ENCODE measurements at regions of chr1 and their contacts with region 1.

Region 1: DNA sequence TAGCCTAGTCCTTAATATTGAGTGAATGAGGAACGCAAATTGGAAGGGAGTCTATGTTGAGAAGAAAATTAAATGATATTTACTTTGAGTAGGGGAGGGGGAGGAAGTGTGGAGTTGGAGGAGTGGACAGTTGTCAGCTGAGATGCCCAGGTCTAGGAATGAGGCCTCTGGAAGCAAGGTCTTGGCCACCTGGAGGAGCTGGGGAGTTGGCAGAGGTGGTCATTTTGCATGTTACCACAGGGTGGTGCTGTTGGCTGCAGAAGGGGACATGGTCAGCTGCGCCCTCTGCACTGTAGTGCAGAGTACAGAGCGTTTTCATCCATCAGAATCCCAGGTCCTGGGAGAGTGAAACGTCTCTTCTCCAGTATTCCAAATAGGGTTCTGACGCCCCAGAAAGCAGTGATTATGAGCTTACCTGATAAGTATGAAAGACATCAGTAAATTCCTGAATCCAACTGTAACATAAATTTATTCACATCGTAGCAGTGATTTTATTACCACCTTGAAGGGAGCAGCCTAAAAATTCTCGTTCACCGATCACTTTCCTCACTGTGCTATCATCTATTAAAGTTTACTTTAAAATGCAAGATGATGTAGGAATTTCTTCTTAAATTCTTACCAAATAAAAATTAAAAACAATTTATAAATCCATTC is 13.8 kb downstream of the PARK7 start:
- DNase-seq: peak; percentile 87
- H3K4me3 Mint-ChIP-seq: no peak overlapping the region
- H3K27ac Mint-ChIP-seq: no peak overlapping the region
- H3K4me1 Mint-ChIP-seq: no peaks in the 10 kb centered on the region
- H3K27me3 Mint-ChIP-seq: no peaks in the 10 kb centered on the region
- CTCF ChIP-seq: peak; percentile 95

Region 2: DNA sequence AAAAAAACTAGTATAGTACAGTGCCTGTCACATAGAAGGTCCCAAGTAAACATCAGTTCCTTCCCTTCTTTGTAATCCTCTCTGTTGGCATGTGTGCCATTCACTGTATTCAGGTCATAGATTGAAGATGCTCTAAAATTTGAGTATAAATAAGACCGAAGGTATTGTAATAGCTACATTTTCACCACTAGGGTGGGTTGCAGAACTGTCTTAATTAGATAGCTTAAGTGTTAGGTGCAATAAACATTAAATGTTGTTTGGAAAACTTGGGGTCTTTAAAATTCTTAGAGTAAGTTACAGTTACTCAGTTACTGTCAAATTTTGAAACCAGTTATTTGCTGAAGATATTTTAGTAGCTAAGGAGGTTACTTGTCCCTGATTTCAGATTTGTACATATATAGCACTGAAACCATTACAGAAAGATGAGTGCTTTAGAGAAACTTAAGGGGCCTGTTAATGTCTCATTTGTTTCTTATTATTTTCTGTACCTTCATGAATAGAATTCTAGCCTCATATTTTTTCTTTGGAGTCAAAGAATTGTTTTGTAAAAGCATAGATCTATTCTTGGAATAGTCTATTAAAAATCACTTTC is 167.0 kb before region 1 on chr1:
- CTCF ChIA-PET with region 1: no interaction called
- POLR2A ChIA-PET with region 1: no interaction called
- intact Hi-C with region 1: loop called (anchors 1 kb)
- DNase-seq: peak; percentile 44
- H3K4me3 Mint-ChIP-seq: no peak overlapping the region
- H3K27ac Mint-ChIP-seq: no peak overlapping the region
- H3K4me1 Mint-ChIP-seq: no peaks in the 10 kb centered on the region
- H3K27me3 Mint-ChIP-seq: no peaks in the 10 kb centered on the region
- CTCF ChIP-seq: peak; percentile 60

Region 3: DNA sequence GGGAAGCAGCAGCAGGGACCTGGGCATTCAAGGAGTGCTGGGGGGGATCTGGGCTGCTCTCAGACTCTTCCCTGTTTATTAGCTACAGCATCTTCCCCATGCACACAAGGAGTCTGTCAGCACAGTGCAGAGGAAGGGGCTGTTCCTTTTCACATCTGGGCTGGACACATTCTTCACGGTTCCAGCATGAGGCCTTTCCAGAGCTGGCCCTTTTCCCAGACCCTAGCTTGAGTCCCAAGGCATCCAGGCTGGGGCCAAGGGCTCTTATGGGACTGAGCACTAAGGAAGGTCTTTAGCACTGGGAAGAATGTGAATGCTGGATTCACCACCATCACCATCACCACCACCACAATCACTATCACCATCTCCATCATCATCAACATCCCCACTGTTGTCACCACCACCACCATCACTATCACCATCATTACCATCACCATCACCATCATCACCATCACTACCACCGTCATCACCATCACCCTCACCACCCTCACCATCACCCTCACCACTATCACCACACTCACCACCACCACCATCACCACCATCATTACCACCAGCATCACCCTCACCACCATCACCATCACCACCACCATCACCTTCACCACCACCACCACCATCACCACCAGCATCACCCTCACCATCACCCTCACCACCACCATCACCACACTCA is 14.6 kb after region 1 on chr1:
- CTCF ChIA-PET with region 1: interaction called, 21 read pairs
- POLR2A ChIA-PET with region 1: interaction called, 3 read pairs
- intact Hi-C with region 1: no loop called
- DNase-seq: no peak
- H3K4me3 Mint-ChIP-seq: no peak overlapping the region
- H3K27ac Mint-ChIP-seq: no peak overlapping the region
- H3K4me1 Mint-ChIP-seq: peaks cover 15% of the 10 kb centered on the region
- H3K27me3 Mint-ChIP-seq: no peaks in the 10 kb centered on the region
- CTCF ChIP-seq: no peak

Region 4: GRCh38 chr1:8010080-8010664 is 34.8 kb after region 1 on chr1:
- CTCF ChIA-PET with region 1: interaction called, 32 read pairs
- POLR2A ChIA-PET with region 1: interaction called, 35 read pairs
- intact Hi-C with region 1: loop called (anchors 5 kb)
- DNase-seq: no peak
- H3K4me3 Mint-ChIP-seq: no peak overlapping the region
- H3K27ac Mint-ChIP-seq: peak overlapping the region; percentile 79
- H3K4me1 Mint-ChIP-seq: peaks cover 48% of the 10 kb centered on the region
- H3K27me3 Mint-ChIP-seq: no peaks in the 10 kb centered on the region
- CTCF ChIP-seq: no peak

Region 5: DNA sequence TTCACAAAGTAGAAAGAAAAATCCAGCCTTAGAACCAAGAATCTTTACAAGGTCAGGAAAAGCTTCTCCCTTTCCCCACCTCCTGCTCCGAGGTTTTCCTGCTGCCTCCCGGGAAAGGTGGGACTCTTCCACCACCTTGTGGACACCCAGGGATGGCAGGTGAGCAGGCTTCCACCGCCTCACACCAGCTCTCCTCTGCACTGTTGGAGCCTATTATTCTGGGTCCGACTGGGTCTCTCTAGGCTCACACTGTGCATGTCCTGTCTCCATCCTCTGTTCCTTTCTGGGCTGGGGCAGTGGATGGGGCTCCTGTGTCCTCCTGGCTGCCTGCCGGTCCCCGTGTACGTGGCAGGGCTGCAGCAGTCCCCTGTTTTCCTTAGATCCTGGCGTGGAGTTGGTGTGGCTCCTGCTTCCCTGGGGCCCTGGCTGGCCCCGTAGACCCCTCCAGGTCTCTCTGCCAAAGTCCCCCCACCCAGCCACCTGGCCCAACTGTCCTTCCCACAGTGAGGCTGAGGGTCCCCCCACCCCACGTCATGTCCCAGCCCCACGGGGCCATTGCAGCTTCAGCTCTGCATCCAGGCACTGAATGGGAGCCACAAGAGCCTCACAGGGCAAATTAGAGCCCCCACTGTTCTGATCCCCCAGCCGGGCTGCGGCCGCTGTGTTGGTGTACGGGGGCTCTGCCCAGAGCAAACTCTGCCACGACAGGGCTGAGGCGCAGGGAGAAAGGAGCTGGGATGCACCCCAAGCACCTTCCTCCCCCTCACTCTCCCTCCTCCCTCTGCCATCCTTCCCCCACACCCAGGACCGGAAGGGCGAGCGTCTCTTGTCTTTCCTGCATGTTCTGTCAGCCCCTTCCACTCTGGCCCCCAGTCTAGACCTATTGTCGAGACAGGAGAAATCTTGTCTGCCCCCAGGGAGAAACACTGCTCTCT is 339.3 kb after region 1 on chr1:
- CTCF ChIA-PET with region 1: interaction called, 29 read pairs
- POLR2A ChIA-PET with region 1: interaction called, 14 read pairs
- intact Hi-C with region 1: loop called (anchors 1 kb)
- DNase-seq: peak; percentile 85
- H3K4me3 Mint-ChIP-seq: no peak overlapping the region
- H3K27ac Mint-ChIP-seq: no peak overlapping the region
- H3K4me1 Mint-ChIP-seq: peaks cover 15% of the 10 kb centered on the region
- H3K27me3 Mint-ChIP-seq: no peaks in the 10 kb centered on the region
- CTCF ChIP-seq: peak; percentile 95

Measured in MCF 10A (cell line).